Right ventricle myocardium inferior (tissue), 1 donor: ENCODE measurements at regions of chr18 and their contacts with region 1.

Region 1: DNA sequence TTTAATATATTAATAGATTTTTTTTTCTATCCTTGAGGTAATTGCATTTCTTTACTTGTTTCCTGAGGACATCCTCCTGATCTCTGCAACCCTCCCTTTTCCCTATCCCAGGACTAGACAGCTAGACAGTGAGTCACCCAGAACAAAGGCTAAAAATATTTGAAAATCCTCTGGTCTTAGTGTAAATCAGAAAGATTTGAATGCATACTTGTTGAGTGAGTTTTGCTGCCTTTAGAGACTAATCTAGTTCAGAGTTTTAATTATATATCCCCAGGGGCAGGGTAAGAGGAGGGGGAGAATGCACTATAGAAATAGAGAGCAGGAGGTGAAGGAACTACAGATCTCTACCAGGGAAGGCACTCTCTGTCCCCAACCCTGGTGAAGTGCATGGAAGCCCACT is 202.3 kb upstream of the TCF4 start:
- DNase-seq: no peak
- ATAC-seq: no peak

Region 2: DNA sequence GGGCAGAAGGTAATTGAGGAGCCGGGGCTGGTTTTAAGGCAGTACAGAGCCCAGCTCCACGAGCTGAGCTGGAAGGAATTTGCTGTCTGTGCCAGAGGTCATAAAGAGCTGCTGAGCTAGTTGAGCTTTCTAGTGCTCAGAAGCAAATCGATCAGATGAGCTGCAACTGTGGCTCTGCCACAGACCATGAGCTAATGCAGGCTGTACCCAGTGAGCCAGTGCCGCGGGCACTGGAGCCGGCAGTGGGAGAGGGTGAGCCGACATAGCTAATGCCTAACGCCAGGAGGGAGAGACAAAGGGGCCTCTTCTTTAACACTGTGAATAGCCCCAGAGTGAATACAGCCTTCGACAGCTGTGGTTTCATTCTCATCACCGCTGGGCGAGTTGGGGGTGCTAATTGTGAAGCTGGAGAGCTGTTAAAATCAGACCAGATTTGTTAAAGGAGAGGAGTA is 207.8 kb after region 1 on chr18:
- intact Hi-C with region 1: loop called (anchors 10 kb)
- DNase-seq: no peak
- ATAC-seq: peak; percentile 53